AG04450 (cell line): ENCODE measurements at regions of chr1 and their contacts with region 1.

Region 1: DNA sequence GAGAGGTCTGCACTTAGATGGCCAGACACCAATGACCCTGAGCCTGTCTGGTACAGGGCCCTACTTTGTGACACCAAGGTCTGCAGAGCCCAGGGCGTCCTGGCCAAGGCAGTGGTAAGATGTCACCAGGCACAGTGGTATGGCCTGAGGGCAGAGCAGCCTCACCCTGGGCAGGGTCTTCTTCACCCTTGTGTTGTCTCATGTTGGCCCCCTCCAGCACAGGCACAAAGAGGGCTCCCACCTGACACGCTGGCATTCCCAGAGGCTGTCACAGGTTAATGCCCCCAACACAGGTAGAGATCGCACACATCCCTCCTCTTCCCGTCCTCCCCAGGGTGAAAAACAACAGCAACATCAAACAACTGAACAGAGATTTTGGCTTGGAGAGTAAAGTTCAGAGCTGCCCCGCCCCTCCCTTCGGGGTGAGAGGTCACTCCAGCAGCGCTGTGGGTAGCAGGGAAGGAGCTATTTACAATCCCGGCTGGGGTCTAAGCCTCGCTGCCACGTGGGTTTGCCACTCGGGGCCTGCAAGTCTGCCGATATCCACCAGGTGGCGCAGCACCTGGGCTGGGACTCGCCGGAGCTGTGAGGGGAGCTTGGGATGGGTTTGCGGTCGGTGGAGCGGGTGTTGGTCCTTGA is 12.6 kb downstream of the EFNA3 start:
- DNase-seq: no peak
- H3K4me3 ChIP-seq: no peak overlapping the region
- H3K27ac ChIP-seq: no peak overlapping the region
- H3K27me3 ChIP-seq: peaks cover 17% of the 10 kb centered on the region
- CTCF ChIP-seq: peak; percentile 93

Region 2: GRCh38 chr1:155044812-155045690 is 46.1 kb before region 1 on chr1:
- CTCF ChIA-PET with region 1: interaction called, 10 read pairs
- POLR2A ChIA-PET with region 1: no interaction called
- DNase-seq: peak; percentile 45
- H3K4me3 ChIP-seq: no peak overlapping the region
- H3K27ac ChIP-seq: no peak overlapping the region
- H3K27me3 ChIP-seq: peaks cover 9% of the 10 kb centered on the region
- CTCF ChIP-seq: peak; percentile 75

Region 3: GRCh38 chr1:155078469-155079209 is 12.6 kb before region 1 on chr1 and contains the start of gene EFNA3:
- CTCF ChIA-PET with region 1: interaction called, 10 read pairs
- POLR2A ChIA-PET with region 1: no interaction called
- DNase-seq: no peak
- H3K4me3 ChIP-seq: peak within 1 kb of the TSS; percentile 50
- H3K27ac ChIP-seq: no peak within 1 kb of the TSS
- H3K27me3 ChIP-seq: peaks cover 64% of the 10 kb centered on the region
- CTCF ChIP-seq: no peak
- polyA plus RNA-seq, gene EFNA3: 0.51 and 0.56 TPM in 2 replicates

Region 4: DNA sequence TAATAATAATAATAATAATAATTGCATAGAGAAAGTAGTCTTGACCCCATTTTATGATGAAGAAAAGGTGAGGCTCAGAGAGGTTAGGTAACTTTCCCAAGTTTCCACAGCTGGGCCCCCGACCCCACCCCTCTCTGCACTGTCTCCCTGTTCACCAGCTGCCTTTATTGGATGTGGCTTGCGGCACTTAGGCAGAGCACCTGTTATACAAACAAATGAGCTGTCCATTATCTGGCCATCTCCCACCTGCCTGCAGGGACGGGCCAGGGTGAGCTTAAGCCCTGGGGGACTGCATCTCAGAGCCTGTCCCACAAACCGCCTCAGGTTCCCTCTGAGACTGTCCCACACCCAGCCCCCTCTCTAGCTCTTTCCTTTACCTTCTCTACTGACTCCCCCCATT is 26.4 kb after region 1 on chr1:
- CTCF ChIA-PET with region 1: interaction called, 10 read pairs
- POLR2A ChIA-PET with region 1: no interaction called
- DNase-seq: no peak
- H3K4me3 ChIP-seq: no peak overlapping the region
- H3K27ac ChIP-seq: no peak overlapping the region
- H3K27me3 ChIP-seq: peaks cover 40% of the 10 kb centered on the region
- CTCF ChIP-seq: no peak

Region 5: GRCh38 chr1:155127105-155127964 is 36.1 kb after region 1 on chr1 and contains the start of gene EFNA1:
- CTCF ChIA-PET with region 1: interaction called, 14 read pairs
- POLR2A ChIA-PET with region 1: no interaction called
- DNase-seq: no peak
- H3K4me3 ChIP-seq: peak within 1 kb of the TSS; percentile 59
- H3K27ac ChIP-seq: no peak within 1 kb of the TSS
- H3K27me3 ChIP-seq: peaks cover 41% of the 10 kb centered on the region
- CTCF ChIP-seq: no peak
- polyA plus RNA-seq, gene EFNA1: 1.1 and 1.4 TPM in 2 replicates

Region 6: DNA sequence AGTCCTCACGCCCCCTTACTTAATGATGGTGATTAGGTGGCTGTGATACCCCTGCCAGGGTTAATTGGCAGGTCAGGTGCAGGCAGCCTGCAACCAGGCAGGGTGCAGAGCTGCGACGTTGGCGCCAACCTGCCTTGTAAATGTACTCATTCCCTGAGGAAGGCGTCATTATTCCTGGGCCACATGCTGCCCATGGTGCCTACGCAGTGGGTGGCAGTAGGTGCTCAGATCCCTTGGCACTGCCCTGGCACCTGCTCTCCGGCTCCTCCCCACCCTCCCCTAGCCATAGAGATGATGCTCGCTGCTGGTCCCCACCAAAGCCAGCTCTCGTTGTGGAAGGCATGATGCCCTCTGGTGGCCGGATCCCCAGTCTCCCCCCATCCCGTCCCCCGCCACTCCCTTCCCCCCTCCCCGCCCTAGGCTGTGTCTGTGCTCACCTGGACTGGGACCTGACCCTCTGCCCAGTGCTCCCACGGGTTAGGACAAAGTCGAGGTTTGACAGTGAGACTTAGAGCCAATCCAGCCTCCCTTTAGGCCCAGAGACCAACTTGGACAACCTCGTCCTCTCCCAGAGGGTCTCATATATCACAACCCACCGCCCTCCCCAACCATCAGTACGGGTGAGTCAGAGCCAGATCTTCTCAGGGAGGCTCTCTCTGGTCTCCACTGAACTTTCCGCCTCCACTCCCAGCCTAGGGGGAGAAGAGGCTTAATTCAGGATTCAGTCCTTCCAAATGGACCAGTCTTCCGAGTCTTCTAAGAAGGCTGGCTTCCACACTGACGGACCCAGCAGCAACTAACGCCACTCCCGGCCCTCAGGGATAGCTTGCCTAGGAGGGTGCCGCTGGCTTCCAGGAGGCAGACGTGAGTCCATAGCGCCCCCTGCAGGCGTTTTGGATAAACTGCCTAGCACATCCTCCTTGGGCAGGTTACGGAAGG is 76.2 kb after region 1 on chr1:
- CTCF ChIA-PET with region 1: interaction called, 317 read pairs
- POLR2A ChIA-PET with region 1: interaction called, 9 read pairs
- DNase-seq: peak; percentile 54
- H3K4me3 ChIP-seq: no peak overlapping the region
- H3K27ac ChIP-seq: no peak overlapping the region
- H3K27me3 ChIP-seq: no peaks in the 10 kb centered on the region
- CTCF ChIP-seq: peak; percentile 89